ENCODE measurements at regions of chr7 and their contacts with region 1.

Region 1: DNA sequence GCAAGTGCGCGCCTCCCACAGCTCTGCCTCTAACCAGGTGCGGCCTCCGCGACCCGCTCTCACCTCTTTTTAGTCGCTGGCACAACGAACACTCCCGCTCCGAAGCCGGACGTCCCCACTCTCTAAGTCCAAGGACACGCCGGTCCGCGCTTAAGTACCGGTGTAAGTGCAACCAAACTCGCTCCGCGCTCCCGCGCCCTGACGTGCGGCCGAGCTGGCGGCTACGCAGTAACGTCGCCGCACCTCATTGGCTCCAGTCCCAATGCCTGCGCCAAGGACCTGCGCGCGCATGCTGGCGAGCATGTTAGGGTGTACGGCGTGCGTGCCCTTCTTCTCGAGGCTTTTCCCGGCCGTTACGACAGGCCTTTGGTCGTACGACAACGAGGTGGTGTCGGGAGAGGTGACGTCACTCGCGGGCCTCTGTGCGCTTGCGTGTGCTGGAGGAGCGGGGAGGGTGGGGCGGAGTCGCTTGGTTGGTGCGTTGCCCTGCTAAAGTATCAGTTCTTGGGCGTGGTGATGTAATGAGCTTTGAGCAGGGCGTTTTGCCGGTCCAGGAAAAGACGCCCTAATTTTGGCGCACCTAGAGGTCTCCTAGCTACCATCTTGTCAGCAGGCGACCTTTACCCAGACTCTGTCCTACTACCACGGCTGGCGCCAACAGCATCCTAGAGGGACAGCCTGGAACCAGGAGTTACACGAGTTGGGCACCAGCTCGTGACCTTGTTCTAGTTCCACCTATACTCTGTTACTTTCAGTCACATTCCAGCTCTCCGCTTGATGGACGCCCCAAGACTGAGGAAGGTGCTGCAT is at the start of gene CYCS:
- DNase-seq: peak; percentile 100
- H3K4me3 Mint-ChIP-seq: peak within 1 kb of the TSS; percentile 93
- H3K27ac Mint-ChIP-seq: peak within 1 kb of the TSS; percentile 98
- H3K4me1 Mint-ChIP-seq: peaks cover 31% of the 10 kb centered on the region
- H3K27me3 Mint-ChIP-seq: no peaks in the 10 kb centered on the region
- total RNA-seq, gene CYCS: 213 to 224 TPM

Region 2: DNA sequence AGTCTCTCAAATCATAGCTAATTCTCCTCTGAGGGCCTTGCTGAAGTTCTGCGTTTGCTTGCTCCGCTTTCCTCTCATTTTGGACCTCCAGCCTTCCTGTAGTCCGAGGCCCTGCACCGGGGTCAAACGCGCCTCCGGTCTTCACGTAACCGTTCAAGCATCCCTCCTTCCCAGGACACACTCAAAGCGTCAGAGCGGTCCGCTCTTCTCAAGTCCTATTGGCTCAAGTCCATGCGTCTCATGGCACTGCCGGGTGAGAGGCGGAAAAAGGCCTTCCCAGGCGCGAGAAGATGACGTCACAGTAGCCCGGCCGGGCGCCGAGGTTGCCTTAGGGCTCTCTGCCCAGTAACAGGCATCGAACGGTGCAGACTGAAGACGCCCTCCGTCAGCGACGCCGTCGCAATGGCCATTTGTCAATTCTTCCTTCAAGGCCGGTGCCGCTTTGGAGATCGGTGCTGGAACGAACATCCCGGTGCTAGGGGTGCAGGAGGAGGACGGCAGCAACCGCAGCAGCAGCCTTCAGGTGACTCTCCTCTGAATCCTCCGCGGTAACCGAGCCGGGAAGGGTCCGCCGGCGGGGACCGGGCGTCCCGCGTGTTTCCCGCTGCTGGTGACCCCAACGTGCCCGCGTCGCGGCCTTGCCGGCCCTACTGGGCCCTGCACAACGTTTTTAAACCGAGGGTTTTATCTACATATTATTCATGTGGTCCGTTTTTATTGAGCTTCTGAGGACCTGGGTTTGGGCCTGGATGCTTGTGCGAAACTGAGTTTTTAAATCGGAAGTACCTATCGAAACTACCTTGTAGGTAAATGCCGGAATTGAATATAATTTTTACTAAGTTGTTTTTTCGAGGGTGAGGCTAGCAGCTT is 1943.4 kb before region 1 on chr7 and contains the start of gene NUP42:
- CTCF ChIA-PET with region 1: no interaction called
- intact Hi-C with region 1: loop called (anchors 5 kb)
- DNase-seq: peak; percentile 98
- H3K4me3 Mint-ChIP-seq: peak within 1 kb of the TSS; percentile 99
- H3K27ac Mint-ChIP-seq: peak within 1 kb of the TSS; percentile 99
- H3K4me1 Mint-ChIP-seq: peaks cover 35% of the 10 kb centered on the region
- H3K27me3 Mint-ChIP-seq: no peaks in the 10 kb centered on the region
- total RNA-seq, gene NUP42: 15.2 to 17.0 TPM

Region 3: GRCh38 chr7:23531794-23532489 is 1593.4 kb before region 1 on chr7 and contains the start of gene TRA2A:
- CTCF ChIA-PET with region 1: no interaction called
- intact Hi-C with region 1: loop called (anchors 1 kb)
- DNase-seq: peak; percentile 99
- H3K4me3 Mint-ChIP-seq: peak within 1 kb of the TSS; percentile 99
- H3K27ac Mint-ChIP-seq: peak within 1 kb of the TSS; percentile 100
- H3K4me1 Mint-ChIP-seq: peaks cover 43% of the 10 kb centered on the region
- H3K27me3 Mint-ChIP-seq: no peaks in the 10 kb centered on the region
- total RNA-seq, gene TRA2A: 77.8 to 79.0 TPM

Region 4: GRCh38 chr7:25054819-25055519 is 70.4 kb before region 1 on chr7:
- CTCF ChIA-PET with region 1: no interaction called
- intact Hi-C with region 1: no loop called
- DNase-seq: no peak
- H3K4me3 Mint-ChIP-seq: no peak overlapping the region
- H3K27ac Mint-ChIP-seq: no peak overlapping the region
- H3K4me1 Mint-ChIP-seq: no peaks in the 10 kb centered on the region
- H3K27me3 Mint-ChIP-seq: no peaks in the 10 kb centered on the region

Region 5: DNA sequence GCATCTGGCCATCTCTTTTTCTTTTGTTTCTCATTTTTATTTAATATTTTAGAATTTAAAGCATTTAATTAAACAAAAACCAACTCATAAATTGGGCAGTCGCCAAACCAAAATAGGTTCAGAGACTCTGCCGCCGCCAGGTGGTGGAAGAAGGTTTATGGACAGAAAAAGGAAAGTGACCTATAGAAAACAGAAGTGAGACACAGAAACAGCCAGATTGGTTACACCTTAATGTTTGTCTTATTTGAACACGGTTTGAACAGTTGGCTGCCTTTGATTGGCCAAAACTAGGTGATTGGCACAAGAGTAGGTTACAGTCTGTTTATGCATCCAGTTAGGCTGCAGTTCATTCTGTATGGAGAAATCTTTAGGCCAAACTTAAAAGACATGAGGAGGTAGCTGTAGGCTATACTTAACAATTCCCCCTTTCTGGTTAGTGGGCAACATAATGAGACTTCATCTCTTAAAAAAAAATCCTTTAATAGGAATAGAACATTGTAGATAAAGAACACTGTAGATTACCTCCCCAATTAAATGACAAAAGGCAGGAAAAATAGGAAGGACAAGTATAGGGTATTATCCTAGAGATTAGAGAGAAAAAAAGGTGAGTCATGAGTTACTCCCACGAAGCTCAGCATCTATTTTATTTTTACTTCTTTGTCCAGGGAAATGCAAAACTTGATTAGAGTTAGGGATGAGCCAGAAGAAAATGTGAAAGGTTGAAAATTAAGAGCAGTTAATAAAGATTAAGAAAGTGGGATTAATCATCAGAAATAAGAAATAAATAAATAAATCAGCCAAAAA is 23.6 kb after region 1 on chr7:
- CTCF ChIA-PET with region 1: interaction called, 4 read pairs
- intact Hi-C with region 1: loop called (anchors 1 kb)
- DNase-seq: no peak
- H3K4me3 Mint-ChIP-seq: no peak overlapping the region
- H3K27ac Mint-ChIP-seq: no peak overlapping the region
- H3K4me1 Mint-ChIP-seq: peaks cover 18% of the 10 kb centered on the region
- H3K27me3 Mint-ChIP-seq: no peaks in the 10 kb centered on the region

Region 6: DNA sequence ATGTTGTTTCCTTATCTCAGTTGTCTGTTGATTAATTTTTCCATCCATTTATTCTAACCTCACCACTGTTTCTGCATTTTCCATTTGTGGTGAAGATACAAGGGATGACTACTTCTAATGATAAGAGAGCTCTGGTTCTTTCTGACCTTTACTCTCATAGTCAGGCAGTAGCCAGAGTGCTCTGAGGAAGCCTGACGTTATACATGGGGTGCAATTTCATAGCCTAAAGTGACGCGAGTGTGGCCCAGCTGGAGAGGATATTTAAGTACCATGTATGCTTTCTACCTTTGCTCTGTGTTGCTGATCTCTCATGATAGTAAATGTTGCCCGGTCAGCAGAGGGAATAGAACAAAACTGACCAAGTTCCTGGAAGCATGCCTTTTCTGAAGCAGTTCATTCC is 33.6 kb after region 1 on chr7:
- CTCF ChIA-PET with region 1: interaction called, 8 read pairs
- intact Hi-C with region 1: loop called (anchors 1 kb)
- DNase-seq: no peak
- H3K4me3 Mint-ChIP-seq: no peak overlapping the region
- H3K27ac Mint-ChIP-seq: no peak overlapping the region
- H3K4me1 Mint-ChIP-seq: no peaks in the 10 kb centered on the region
- H3K27me3 Mint-ChIP-seq: no peaks in the 10 kb centered on the region

Region 7: DNA sequence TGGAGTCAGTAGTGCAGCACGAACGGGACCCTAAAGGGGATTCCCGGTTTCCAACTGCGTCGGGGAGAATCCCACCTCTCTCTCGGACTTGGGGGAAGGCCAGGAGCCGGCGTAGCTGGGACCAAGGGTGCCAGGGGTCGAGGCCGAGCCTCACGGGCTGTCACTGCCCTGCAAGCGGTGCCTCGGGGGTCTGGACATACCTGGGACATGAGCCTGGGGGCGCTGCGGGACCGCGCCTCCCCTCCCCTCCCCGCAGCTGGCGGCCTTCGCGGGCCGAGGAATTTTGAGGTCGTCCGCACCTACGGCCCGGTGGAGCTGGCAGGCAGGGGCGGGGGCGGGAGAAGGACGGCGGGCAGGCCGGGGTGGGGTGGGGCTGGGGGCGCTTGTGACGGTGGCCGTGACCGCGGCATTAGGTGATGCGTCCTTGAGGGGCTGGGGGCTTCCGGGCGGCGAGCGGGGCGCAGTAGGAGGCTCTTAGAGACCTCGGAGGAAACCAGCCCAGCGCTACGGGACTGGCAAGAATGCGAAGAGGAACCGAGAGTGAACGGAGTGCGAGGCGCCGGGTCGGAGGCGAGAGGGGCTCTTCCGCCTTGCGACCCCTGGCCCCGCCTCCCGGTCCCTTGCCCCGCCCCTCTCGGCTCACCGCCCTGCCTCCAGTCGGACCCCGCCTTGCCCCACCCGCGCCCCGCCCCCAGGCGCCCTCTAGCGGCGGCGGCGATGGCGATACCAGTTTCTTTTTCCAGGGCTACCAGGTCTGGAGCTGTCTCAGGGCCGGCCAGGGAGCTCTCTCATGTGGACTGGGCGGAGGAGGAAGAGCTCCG is 54.6 kb after region 1 on chr7:
- CTCF ChIA-PET with region 1: interaction called, 5 read pairs
- intact Hi-C with region 1: loop called (anchors 1 kb)
- DNase-seq: peak; percentile 94
- H3K4me3 Mint-ChIP-seq: peak overlapping the region; percentile 83
- H3K27ac Mint-ChIP-seq: peak overlapping the region; percentile 81
- H3K4me1 Mint-ChIP-seq: peaks cover 19% of the 10 kb centered on the region
- H3K27me3 Mint-ChIP-seq: no peaks in the 10 kb centered on the region

Region 8: DNA sequence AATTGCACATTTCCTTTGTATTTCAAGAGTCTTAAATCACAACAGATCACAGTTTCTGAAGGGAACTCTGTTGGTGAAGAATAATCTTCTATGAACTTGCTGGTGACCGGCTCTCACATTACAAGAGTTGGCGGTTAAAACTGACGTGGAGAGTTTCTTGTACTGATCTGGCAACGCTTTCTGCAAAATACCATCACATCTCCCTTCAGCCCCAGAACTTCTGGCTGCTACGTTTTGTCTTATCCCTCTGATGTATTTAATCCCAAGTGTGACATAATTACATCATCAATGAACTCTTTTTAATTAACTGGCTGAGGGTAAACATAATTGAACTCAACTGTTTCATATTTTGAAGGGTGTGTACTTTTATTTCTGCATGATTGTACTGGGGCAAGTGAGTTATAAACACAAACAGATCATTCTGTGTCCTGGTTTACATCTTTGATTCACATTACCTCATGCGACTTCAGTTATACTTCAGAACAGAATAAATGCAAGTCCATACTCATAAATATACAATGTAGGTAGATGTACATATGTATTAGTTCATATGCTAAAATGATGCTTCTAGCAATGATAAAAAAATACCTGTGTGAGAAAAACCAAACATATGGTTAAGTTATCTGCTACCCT is 208.1 kb after region 1 on chr7:
- CTCF ChIA-PET with region 1: no interaction called
- intact Hi-C with region 1: no loop called
- DNase-seq: no peak
- H3K4me3 Mint-ChIP-seq: no peak overlapping the region
- H3K27ac Mint-ChIP-seq: no peak overlapping the region
- H3K4me1 Mint-ChIP-seq: no peaks in the 10 kb centered on the region
- H3K27me3 Mint-ChIP-seq: peaks cover 2% of the 10 kb centered on the region

Region 9: GRCh38 chr7:25804154-25804553 is 678.8 kb after region 1 on chr7:
- CTCF ChIA-PET with region 1: no interaction called
- intact Hi-C with region 1: loop called (anchors 1 kb)
- DNase-seq: no peak
- H3K4me3 Mint-ChIP-seq: no peak overlapping the region
- H3K27ac Mint-ChIP-seq: no peak overlapping the region
- H3K4me1 Mint-ChIP-seq: peaks cover 19% of the 10 kb centered on the region
- H3K27me3 Mint-ChIP-seq: peaks cover 3% of the 10 kb centered on the region